A673 (cell line): ENCODE measurements at regions of chr1 and their contacts with region 1.

Region 1: GRCh38 chr1:195939844-195940243 is 668.4 kb downstream of the KCNT2 start:
- DNase-seq: peak; percentile 4
- H3K4me3 ChIP-seq: no peak overlapping the region
- H3K27ac ChIP-seq: no peak overlapping the region
- H3K4me1 ChIP-seq: no peaks in the 10 kb centered on the region
- H3K27me3 ChIP-seq: no peaks in the 10 kb centered on the region
- CTCF ChIP-seq: peak; percentile 32; the same call in 1 of the 2 replicates

Region 2: DNA sequence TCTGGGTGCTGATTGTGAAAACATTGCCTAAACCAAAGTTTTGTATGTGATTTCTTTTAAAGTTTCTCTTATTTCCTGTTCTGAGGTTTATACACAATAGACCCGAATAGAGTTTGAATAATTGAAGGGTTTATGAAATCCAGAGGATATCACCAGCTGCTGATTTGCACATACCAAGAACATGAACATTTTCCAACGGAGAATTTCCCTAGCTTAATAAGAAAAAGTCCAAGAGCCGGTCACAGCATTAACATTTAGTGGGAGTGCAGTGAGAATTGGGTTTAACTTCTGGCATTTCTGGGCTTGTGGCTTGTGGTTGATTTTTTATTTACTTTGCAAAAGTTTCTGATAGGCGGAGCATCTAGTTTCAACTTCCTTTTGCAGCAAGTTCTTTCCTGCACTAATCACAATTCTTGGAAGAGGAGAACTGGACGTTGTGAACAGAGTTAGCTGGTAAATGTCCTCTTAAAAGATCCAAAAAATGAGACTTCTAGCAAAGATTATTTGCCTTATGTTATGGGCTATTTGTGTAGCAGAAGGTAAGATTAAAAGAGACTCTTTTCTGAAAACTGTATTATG is 711.9 kb after region 1 on chr1 and contains the start of gene CFH:
- CTCF ChIA-PET with region 1: no interaction called
- POLR2A ChIA-PET with region 1: no interaction called
- intact Hi-C with region 1: loop called (anchors 10 kb)
- DNase-seq: peak; percentile 19
- H3K4me3 ChIP-seq: peak within 1 kb of the TSS; percentile 28
- H3K27ac ChIP-seq: no peak within 1 kb of the TSS
- H3K4me1 ChIP-seq: peaks cover 7% of the 10 kb centered on the region
- H3K27me3 ChIP-seq: no peaks in the 10 kb centered on the region
- CTCF ChIP-seq: no peak
- total RNA-seq, gene CFH: 2.0 and 2.2 TPM in 2 replicates